ENCODE measurements at regions of chr21 and their contacts with region 1.

Region 1: GRCh38 chr21:15592271-15592860 is 137.4 kb upstream of the USP25 start:
- DNase-seq: no peak
- ATAC-seq: peak; percentile 68

Region 2: GRCh38 chr21:14259747-14260146 is 1332.6 kb before region 1 on chr21:
- intact Hi-C with region 1: loop called in 1 of 2 experiments (anchors 10 kb)
- DNase-seq: no peak
- ATAC-seq: peak; percentile 74

Region 3: DNA sequence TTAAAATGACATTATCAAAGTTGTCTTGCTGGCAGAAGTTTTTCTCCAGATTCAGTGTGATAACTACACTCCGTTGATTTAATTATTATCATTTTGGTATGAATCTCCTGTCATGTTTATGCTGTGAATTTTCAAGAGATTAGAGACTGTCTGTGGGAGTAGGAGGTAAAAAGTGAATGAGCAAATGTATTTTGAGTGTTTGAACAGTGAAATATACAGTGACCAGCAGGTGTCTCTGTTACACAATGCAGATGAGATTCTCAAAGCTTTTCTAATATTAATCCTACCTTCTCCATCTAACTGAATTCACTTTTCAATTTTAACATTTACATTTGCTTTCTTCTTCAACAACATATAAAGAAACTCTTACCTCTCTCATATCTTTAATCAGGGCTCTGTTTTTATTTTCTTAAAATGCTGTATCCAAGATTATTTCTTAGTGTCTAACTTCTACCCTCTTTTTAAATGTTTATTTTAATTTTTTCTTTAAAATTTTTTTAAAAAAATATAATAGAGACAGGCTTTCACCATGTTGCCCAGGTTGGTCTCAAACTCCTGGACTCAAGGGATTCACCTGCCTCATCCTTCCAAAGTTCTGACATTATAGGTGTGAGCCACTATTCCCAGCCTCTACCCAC is 1188.6 kb before region 1 on chr21:
- intact Hi-C with region 1: loop called in 1 of 2 experiments (anchors 10 kb)
- DNase-seq: no peak
- ATAC-seq: peak; percentile 68

Region 4: DNA sequence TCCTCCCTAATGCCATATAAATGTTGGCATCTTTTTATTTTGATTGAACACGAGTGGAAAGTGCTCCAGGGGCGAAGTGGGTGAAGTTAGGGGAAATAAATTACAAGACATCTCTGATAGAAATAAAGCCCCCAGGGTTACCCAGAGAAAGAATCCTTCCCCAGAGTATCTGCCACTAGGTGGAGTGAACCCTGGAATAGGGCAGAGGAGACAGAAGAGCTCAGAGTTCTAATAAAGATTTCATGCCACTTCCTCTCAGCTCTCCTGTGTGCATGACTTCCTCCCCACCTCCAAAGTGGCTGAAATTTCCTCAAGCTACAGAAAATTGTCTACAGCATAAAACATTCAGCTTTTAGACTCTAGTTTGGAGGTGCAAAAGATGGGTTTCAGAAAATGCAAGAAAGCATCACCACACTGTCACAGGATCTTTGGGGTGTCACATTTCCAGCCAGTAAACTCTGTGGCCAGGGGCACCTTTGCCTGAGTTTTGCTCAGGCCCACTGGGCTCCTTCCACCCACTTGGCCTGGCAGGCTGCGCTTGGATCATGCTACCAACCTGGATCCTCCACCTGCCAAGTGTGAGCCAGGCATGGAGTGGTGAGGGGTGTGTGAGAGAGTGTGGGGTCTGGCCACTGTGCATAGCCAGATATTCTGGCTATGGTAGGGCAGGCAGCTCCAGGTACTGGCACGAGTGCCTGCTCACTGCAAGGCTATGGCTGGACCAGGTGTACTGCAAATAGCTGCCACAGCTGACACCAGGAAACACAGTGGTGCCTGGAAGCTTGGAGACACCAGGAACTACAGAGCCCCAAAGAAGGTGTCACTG is 71.3 kb before region 1 on chr21:
- intact Hi-C with region 1: no loop called
- DNase-seq: no peak
- ATAC-seq: peak; percentile 40

Region 5: GRCh38 chr21:16928439-16928838 is 1336.1 kb after region 1 on chr21:
- intact Hi-C with region 1: no loop called
- DNase-seq: no peak
- ATAC-seq: no peak